Activated CD4-positive, alpha-beta T cell treated with anti-CD3 and anti-CD28 coated beads, Interleukin-2, amount 10 ng/mL, durations not matched to agents 24 days and 14 days (primary cell): ENCODE measurements at regions of chr4 and their contacts with region 1.

Region 1: DNA sequence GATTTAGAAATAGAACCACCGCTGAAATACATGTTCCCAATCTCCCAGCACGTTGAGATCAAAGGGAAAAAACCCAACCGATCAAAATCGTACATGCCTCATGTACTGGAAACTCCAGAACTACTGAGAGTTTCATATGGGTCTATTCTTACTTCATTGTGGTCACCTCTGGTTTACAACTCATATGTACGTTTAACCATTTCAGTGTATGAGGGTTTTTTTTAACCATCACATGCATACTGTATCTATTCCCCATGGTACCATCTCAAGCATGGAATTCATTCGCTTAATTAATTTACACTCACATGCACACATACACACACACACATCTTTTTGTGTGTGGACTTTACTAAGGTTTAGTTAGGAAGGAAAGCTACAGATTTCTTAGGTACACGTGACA is 46.0 kb upstream of the CLNK start:
- DNase-seq: no peak
- H3K4me3 Mint-ChIP-seq: peak overlapping the region; percentile 40
- H3K27ac Mint-ChIP-seq: peak overlapping the region; percentile 97
- H3K4me1 Mint-ChIP-seq: peaks cover 61% of the 10 kb centered on the region
- H3K27me3 Mint-ChIP-seq: no peaks in the 10 kb centered on the region

Region 2: GRCh38 chr4:10116580-10117358 is 613.8 kb before region 1 on chr4 and contains the start of gene WDR1:
- intact Hi-C with region 1: loop called (anchors 2 kb)
- DNase-seq: peak; percentile 97
- H3K4me3 Mint-ChIP-seq: peak within 1 kb of the TSS; percentile 98
- H3K27ac Mint-ChIP-seq: peak within 1 kb of the TSS; percentile 95
- H3K4me1 Mint-ChIP-seq: peaks cover 70% of the 10 kb centered on the region
- H3K27me3 Mint-ChIP-seq: no peaks in the 10 kb centered on the region
- total RNA-seq, gene WDR1: 369 and 376 TPM in 2 replicates

Region 3: GRCh38 chr4:10582059-10582686 is 148.4 kb before region 1 on chr4:
- intact Hi-C with region 1: loop called (anchors 5 kb)
- DNase-seq: peak; percentile 69
- H3K4me3 Mint-ChIP-seq: no peak overlapping the region
- H3K27ac Mint-ChIP-seq: no peak overlapping the region
- H3K4me1 Mint-ChIP-seq: peaks cover 14% of the 10 kb centered on the region
- H3K27me3 Mint-ChIP-seq: no peaks in the 10 kb centered on the region

Region 4: DNA sequence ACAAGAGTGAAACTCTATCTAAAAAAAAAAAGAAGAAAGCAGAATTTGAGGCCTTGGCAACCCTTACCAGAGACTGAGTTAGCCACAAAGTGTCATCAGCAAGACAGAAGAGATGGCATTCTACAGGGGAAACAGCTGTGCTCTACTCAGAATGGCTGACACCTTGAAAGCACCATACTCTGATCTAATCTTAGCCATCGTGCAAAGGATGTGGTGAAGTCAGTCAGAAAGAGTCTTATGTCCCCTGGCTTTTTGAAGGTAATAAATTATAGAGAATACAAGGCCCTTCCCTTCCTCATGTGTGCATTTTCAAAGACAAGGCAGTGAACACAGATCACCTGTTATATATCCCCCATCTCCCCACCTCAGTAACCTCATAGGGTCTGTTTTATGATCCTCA is 59.2 kb before region 1 on chr4:
- intact Hi-C with region 1: loop called (anchors 2 kb)
- DNase-seq: peak; percentile 87
- H3K4me3 Mint-ChIP-seq: peak overlapping the region; percentile 43
- H3K27ac Mint-ChIP-seq: peak overlapping the region; percentile 85
- H3K4me1 Mint-ChIP-seq: peaks cover 31% of the 10 kb centered on the region
- H3K27me3 Mint-ChIP-seq: no peaks in the 10 kb centered on the region

Region 5: GRCh38 chr4:10783351-10783750 is 52.8 kb after region 1 on chr4:
- intact Hi-C with region 1: loop called (anchors 5 kb)
- DNase-seq: no peak
- H3K4me3 Mint-ChIP-seq: no peak overlapping the region
- H3K27ac Mint-ChIP-seq: peak overlapping the region; percentile 13
- H3K4me1 Mint-ChIP-seq: peaks cover 19% of the 10 kb centered on the region
- H3K27me3 Mint-ChIP-seq: no peaks in the 10 kb centered on the region

Region 6: GRCh38 chr4:10949039-10949733 is 218.6 kb after region 1 on chr4:
- intact Hi-C with region 1: loop called (anchors 1 kb)
- DNase-seq: no peak
- H3K4me3 Mint-ChIP-seq: no peak overlapping the region
- H3K27ac Mint-ChIP-seq: no peak overlapping the region
- H3K4me1 Mint-ChIP-seq: peaks cover 2% of the 10 kb centered on the region
- H3K27me3 Mint-ChIP-seq: peaks cover 9% of the 10 kb centered on the region

Region 7: DNA sequence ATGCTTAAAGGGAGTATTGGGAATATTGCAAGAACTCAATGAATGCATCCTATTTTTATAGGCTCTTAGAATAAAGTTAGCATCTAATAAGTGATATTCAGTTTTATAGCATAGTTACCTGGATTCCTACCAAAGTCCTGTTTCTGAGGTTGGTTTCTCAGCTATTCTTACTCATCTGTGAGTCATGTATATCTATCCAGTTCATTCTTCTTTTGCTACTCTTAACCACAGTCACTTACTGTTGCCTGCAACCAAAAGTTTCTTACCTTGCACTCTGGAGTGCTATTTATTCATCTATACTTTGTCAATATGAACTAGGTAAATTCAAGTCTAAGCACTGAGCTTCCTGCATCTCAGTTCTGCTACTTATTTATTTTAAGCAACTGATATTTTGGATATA is 375.6 kb after region 1 on chr4:
- intact Hi-C with region 1: no loop called
- DNase-seq: no peak
- H3K4me3 Mint-ChIP-seq: no peak overlapping the region
- H3K27ac Mint-ChIP-seq: no peak overlapping the region
- H3K4me1 Mint-ChIP-seq: no peaks in the 10 kb centered on the region
- H3K27me3 Mint-ChIP-seq: no peaks in the 10 kb centered on the region

Region 8: GRCh38 chr4:11263208-11263607 is 532.6 kb after region 1 on chr4:
- intact Hi-C with region 1: no loop called
- DNase-seq: no peak
- H3K4me3 Mint-ChIP-seq: no peak overlapping the region
- H3K27ac Mint-ChIP-seq: no peak overlapping the region
- H3K4me1 Mint-ChIP-seq: no peaks in the 10 kb centered on the region
- H3K27me3 Mint-ChIP-seq: no peaks in the 10 kb centered on the region

Region 9: GRCh38 chr4:11471618-11472017 is 741.0 kb after region 1 on chr4:
- intact Hi-C with region 1: loop called (anchors 5 kb)
- DNase-seq: peak; percentile 87
- H3K4me3 Mint-ChIP-seq: peak overlapping the region; percentile 68
- H3K27ac Mint-ChIP-seq: peak overlapping the region; percentile 92
- H3K4me1 Mint-ChIP-seq: peaks cover 36% of the 10 kb centered on the region
- H3K27me3 Mint-ChIP-seq: peaks cover 2% of the 10 kb centered on the region